CD4-positive, alpha-beta memory T cell (primary cell): ENCODE measurements at regions of chr5 and their contacts with region 1.

Region 1: DNA sequence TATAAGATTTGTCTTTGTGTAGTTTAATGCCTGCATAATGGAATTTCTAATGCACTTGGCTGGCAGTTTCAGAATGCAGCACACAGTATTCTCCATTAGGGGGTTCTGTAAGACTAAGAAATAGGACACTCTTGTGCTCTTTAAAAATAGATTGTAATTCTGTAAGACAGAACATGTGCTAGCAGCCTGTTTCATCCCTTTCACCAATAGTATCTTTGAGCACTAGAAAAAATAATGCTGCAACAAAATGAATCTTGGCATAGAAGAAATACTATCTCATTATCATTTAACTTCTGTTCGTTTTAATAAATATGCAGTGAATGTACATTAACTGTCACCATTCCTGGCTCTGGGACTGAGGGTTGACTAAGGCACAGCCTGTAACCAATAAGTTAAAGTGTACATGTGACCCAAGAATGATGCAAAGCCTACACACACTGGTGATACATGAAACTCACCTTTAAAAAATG is 23.8 kb upstream of the ZNF622 start:
- DNase-seq: peak in 1 of 5 donors; percentile 23
- H3K4me3 ChIP-seq: no peak overlapping the region
- H3K4me3 Mint-ChIP-seq: no peak overlapping the region
- H3K27ac ChIP-seq: no peak overlapping the region
- H3K27ac Mint-ChIP-seq: peak overlapping the region in 1 of 7 donors; percentile 30
- H3K4me1 ChIP-seq: no peaks in the 10 kb centered on the region
- H3K4me1 Mint-ChIP-seq: peaks cover 7 to 55% (median 14%) of the 10 kb centered on the region in 4 donors
- H3K27me3 ChIP-seq: no peaks in the 10 kb centered on the region
- H3K27me3 Mint-ChIP-seq: no peaks in the 10 kb centered on the region

Region 2: GRCh38 chr5:16552666-16553343 is 63.4 kb after region 1 on chr5:
- CTCF ChIA-PET with region 1: no interaction called
- POLR2A ChIA-PET with region 1: no interaction called
- intact Hi-C with region 1: loop called (anchors 5 kb)
- DNase-seq: peak; percentile 6 to 45 (median 19)
- H3K4me3 ChIP-seq: no peak overlapping the region
- H3K4me3 Mint-ChIP-seq: peak overlapping the region in 1 of 8 donors; percentile 1
- H3K27ac ChIP-seq: no peak overlapping the region
- H3K27ac Mint-ChIP-seq: peak overlapping the region in 2 of 7 donors; percentile 3 to 19
- H3K4me1 ChIP-seq: no peaks in the 10 kb centered on the region
- H3K4me1 Mint-ChIP-seq: peaks cover 6 to 58% (median 18%) of the 10 kb centered on the region in 4 donors
- H3K27me3 ChIP-seq: no peaks in the 10 kb centered on the region
- H3K27me3 Mint-ChIP-seq: no peaks in the 10 kb centered on the region

Region 3: DNA sequence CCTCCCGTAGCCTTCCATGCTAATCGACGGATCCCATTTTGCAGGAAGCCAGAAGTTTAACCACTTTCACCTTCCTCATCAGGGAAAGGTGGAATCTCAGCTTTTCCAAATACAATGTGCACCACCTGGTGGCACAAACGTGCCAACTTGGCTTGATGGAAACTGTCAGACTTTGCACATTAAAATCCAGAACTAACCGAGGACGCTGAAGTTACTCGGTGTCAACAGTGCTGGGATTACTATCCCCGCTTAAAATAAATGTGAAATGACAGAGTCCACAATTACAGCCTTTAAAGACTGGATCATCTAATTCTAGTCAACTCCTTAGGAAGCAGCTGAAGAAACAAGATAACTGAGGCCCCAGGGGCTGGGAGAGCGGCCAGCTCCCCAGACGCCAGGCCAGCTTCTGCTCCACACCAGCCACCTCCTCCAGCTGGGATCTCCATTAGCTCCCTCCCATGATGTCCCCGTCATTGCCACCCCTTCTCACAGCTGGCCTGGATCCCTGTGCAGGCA is 177.6 kb after region 1 on chr5:
- CTCF ChIA-PET with region 1: interaction called, 15 read pairs
- POLR2A ChIA-PET with region 1: no interaction called
- intact Hi-C with region 1: no loop called
- DNase-seq: peak in 4 of 5 donors; percentile 8 to 34 (median 22)
- H3K4me3 ChIP-seq: no peak overlapping the region
- H3K4me3 Mint-ChIP-seq: peak overlapping the region in 3 of 8 donors; percentile 8 to 75 (median 58)
- H3K27ac ChIP-seq: no peak overlapping the region
- H3K27ac Mint-ChIP-seq: peak overlapping the region in 1 of 7 donors; percentile 43
- H3K4me1 ChIP-seq: no peaks in the 10 kb centered on the region
- H3K4me1 Mint-ChIP-seq: peaks cover 0 to 3% (median 0%) of the 10 kb centered on the region in 4 donors
- H3K27me3 ChIP-seq: no peaks in the 10 kb centered on the region
- H3K27me3 Mint-ChIP-seq: peaks cover 0 to 5% of the 10 kb centered on the region in 2 donors

Region 4: DNA sequence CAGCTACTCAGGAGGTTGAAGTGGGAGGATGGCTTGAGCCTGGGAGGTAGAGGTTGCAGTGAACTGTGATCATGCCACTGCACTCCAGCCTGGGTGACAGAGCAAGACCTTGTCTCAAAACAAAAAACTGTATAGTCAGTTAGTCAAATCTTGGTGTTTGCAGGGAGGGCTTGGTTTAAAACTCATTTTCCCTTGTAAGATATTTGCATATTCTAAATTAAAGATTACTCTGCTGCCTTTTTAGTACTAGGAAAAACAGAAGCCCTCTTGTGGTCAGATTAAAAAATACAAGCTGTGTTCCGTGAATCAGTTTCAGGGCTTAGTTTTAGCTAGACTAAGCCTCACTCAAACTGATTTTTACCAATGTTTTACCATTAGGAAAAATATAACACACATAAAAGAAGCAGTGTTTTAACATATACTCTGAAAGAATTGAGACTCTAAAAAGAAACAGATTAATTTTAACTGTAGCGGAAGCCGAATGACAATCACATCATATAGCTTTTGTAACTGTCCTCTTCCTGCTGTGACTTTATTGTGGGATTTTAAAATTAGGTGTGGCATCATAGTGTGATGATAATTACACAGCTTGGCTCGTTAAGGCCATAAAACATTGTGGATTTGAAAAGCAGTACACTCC is 643.2 kb after region 1 on chr5:
- CTCF ChIA-PET with region 1: no interaction called
- POLR2A ChIA-PET with region 1: no interaction called
- intact Hi-C with region 1: loop called (anchors 5 kb)
- DNase-seq: no peak
- H3K4me3 ChIP-seq: no peak overlapping the region
- H3K4me3 Mint-ChIP-seq: no peak overlapping the region
- H3K27ac ChIP-seq: no peak overlapping the region
- H3K27ac Mint-ChIP-seq: no peak overlapping the region
- H3K4me1 ChIP-seq: no peaks in the 10 kb centered on the region
- H3K4me1 Mint-ChIP-seq: peaks cover 4 to 11% (median 4%) of the 10 kb centered on the region in 4 donors
- H3K27me3 ChIP-seq: no peaks in the 10 kb centered on the region
- H3K27me3 Mint-ChIP-seq: peaks cover 2 to 3% of the 10 kb centered on the region in 2 donors

Region 5: GRCh38 chr5:17189381-17190036 is 700.2 kb after region 1 on chr5:
- CTCF ChIA-PET with region 1: interaction called, 4 read pairs
- POLR2A ChIA-PET with region 1: no interaction called
- intact Hi-C with region 1: loop called (anchors 5 kb)
- DNase-seq: peak in 4 of 5 donors; percentile 10 to 20 (median 18)
- H3K4me3 ChIP-seq: no peak overlapping the region
- H3K4me3 Mint-ChIP-seq: no peak overlapping the region
- H3K27ac ChIP-seq: no peak overlapping the region
- H3K27ac Mint-ChIP-seq: no peak overlapping the region
- H3K4me1 ChIP-seq: no peaks in the 10 kb centered on the region
- H3K4me1 Mint-ChIP-seq: peaks cover 0 to 3% (median 0%) of the 10 kb centered on the region in 4 donors
- H3K27me3 ChIP-seq: no peaks in the 10 kb centered on the region
- H3K27me3 Mint-ChIP-seq: peaks cover 0 to 5% of the 10 kb centered on the region in 2 donors

Region 6: DNA sequence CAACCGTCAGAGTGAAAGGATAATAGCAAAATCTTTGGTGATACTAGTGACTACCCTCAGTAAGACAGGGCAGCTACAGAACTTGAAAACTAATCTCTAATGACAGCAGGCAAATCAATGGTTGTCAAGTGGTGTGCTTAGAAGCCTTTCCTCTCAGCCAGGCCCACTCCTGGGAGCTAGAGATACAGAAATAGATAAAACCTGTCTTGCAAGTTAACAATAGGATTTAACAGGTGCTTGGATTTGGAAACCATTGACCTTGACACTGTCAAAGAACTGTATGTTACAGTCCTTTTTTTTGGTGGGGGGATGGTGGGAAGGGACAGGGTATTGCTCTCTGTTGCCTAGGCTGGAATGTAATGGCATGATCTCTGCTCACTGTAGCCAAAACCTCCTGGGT is 846.7 kb after region 1 on chr5:
- CTCF ChIA-PET with region 1: no interaction called
- POLR2A ChIA-PET with region 1: no interaction called
- intact Hi-C with region 1: no loop called
- DNase-seq: no peak
- H3K4me3 ChIP-seq: no peak overlapping the region
- H3K4me3 Mint-ChIP-seq: no peak overlapping the region
- H3K27ac ChIP-seq: no peak overlapping the region
- H3K27ac Mint-ChIP-seq: no peak overlapping the region
- H3K4me1 ChIP-seq: no peaks in the 10 kb centered on the region
- H3K4me1 Mint-ChIP-seq: no peaks in the 10 kb centered on the region
- H3K27me3 ChIP-seq: no peaks in the 10 kb centered on the region
- H3K27me3 Mint-ChIP-seq: no peaks in the 10 kb centered on the region